ENCODE measurements at regions of chr12 and their contacts with region 1.

Region 1: GRCh38 chr12:71663561-71664294 is at the start of gene ZFC3H1:
- DNase-seq: peak; percentile 99
- ATAC-seq: peak; percentile 92
- H3K4me3 ChIP-seq: peak within 1 kb of the TSS; percentile 81 to 97
- H3K27ac ChIP-seq: peak within 1 kb of the TSS; percentile 80
- H3K4me1 ChIP-seq: peaks cover 11 to 18% of the 10 kb centered on the region in 2 experiments
- H3K27me3 ChIP-seq: no peaks in the 10 kb centered on the region
- CTCF ChIP-seq: peak in 2 of 3 experiments; percentile 19 to 29; a peak in 3 of 6 replicates
- POLR2A ChIP-seq: peak; percentile 54
- RAD21 ChIP-seq: no peak
- total RNA-seq, gene ZFC3H1: 37.1 TPM

Region 2: GRCh38 chr12:71548893-71549292 is 114.8 kb before region 1 on chr12:
- CTCF ChIA-PET with region 1: no interaction called
- POLR2A ChIA-PET with region 1: no interaction called
- RAD21 ChIA-PET with region 1: no interaction called
- intact Hi-C with region 1: no loop called
- DNase-seq: no peak
- ATAC-seq: no peak
- H3K4me3 ChIP-seq: no peak overlapping the region
- H3K27ac ChIP-seq: no peak overlapping the region
- H3K4me1 ChIP-seq: no peaks in the 10 kb centered on the region
- H3K27me3 ChIP-seq: no peaks in the 10 kb centered on the region
- CTCF ChIP-seq: no peak
- POLR2A ChIP-seq: no peak
- RAD21 ChIP-seq: no peak

Region 3: GRCh38 chr12:71685914-71686665 is 22.4 kb after region 1 on chr12 and contains the start of gene TMEM19:
- CTCF ChIA-PET with region 1: interaction called, 8 read pairs
- POLR2A ChIA-PET with region 1: interaction called, 19 read pairs
- RAD21 ChIA-PET with region 1: interaction called in 1 of 2 experiments, 3 read pairs
- intact Hi-C with region 1: no loop called
- DNase-seq: peak; percentile 81
- ATAC-seq: peak; percentile 97
- H3K4me3 ChIP-seq: peak within 1 kb of the TSS; percentile 61 to 69
- H3K27ac ChIP-seq: peak within 1 kb of the TSS; percentile 84
- H3K4me1 ChIP-seq: peaks cover 0 to 19% of the 10 kb centered on the region in 2 experiments; a peak in 2 of 4 replicates
- H3K27me3 ChIP-seq: no peaks in the 10 kb centered on the region
- CTCF ChIP-seq: peak in 2 of 3 experiments; percentile 35 to 41; a peak in 4 of 6 replicates
- POLR2A ChIP-seq: peak; percentile 78
- RAD21 ChIP-seq: peak; percentile 67
- total RNA-seq, gene TMEM19: 18.9 TPM

Region 4: GRCh38 chr12:71754461-71755145 is 90.9 kb after region 1 on chr12 and contains the start of gene RAB21:
- CTCF ChIA-PET with region 1: no interaction called
- POLR2A ChIA-PET with region 1: no interaction called
- RAD21 ChIA-PET with region 1: no interaction called
- intact Hi-C with region 1: loop called (anchors 2 kb)
- DNase-seq: peak; percentile 92
- ATAC-seq: peak; percentile 98
- H3K4me3 ChIP-seq: peak within 1 kb of the TSS; percentile 62 to 92
- H3K27ac ChIP-seq: peak within 1 kb of the TSS; percentile 51
- H3K4me1 ChIP-seq: peaks cover 7 to 15% of the 10 kb centered on the region in 2 experiments; a peak in 3 of 4 replicates
- H3K27me3 ChIP-seq: no peaks in the 10 kb centered on the region
- CTCF ChIP-seq: peak in 2 of 3 experiments; percentile 18 to 27; a peak in 2 of 6 replicates
- POLR2A ChIP-seq: peak; percentile 77
- RAD21 ChIP-seq: no peak
- total RNA-seq, gene RAB21: 57.1 TPM

Region 5: DNA sequence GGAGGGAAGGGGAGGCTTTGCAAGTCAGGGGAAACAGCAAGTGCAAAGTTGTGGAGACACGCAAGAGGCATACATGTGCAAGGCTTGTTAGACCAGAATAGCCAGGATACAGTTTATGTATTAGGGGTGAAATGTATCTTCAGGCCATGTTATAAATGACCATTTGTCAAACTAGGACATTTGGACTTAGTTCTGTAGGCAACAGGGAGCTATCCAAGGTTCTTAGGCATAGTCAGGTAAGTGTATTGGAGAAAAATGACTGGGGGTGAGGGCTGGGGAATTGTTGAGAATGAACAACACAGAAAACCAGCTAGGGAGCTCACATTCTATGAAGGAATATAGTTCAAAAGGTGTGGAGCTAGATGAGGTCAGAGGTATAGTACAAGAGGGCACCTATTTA is 317.4 kb after region 1 on chr12:
- CTCF ChIA-PET with region 1: no interaction called
- POLR2A ChIA-PET with region 1: no interaction called
- RAD21 ChIA-PET with region 1: no interaction called
- intact Hi-C with region 1: no loop called
- DNase-seq: no peak
- ATAC-seq: no peak
- H3K4me3 ChIP-seq: no peak overlapping the region
- H3K27ac ChIP-seq: no peak overlapping the region
- H3K4me1 ChIP-seq: no peaks in the 10 kb centered on the region
- H3K27me3 ChIP-seq: no peaks in the 10 kb centered on the region
- CTCF ChIP-seq: no peak
- POLR2A ChIP-seq: no peak
- RAD21 ChIP-seq: no peak